Aorta (tissue), 5 donors: ENCODE measurements at regions of chr11 and their contacts with region 1.

Region 1: GRCh38 chr11:118592616-118593367 is 14.6 kb upstream of the PHLDB1 start:
- DNase-seq: peak in 1 of 2 donors; percentile 35
- ATAC-seq: peak; percentile 80
- H3K4me3 ChIP-seq: no peak overlapping the region
- H3K27ac ChIP-seq: peak overlapping the region; percentile 94 to 95
- H3K4me1 ChIP-seq: peaks cover 0 to 8% of the 10 kb centered on the region in 2 donors
- H3K27me3 ChIP-seq: no peaks in the 10 kb centered on the region

Region 2: DNA sequence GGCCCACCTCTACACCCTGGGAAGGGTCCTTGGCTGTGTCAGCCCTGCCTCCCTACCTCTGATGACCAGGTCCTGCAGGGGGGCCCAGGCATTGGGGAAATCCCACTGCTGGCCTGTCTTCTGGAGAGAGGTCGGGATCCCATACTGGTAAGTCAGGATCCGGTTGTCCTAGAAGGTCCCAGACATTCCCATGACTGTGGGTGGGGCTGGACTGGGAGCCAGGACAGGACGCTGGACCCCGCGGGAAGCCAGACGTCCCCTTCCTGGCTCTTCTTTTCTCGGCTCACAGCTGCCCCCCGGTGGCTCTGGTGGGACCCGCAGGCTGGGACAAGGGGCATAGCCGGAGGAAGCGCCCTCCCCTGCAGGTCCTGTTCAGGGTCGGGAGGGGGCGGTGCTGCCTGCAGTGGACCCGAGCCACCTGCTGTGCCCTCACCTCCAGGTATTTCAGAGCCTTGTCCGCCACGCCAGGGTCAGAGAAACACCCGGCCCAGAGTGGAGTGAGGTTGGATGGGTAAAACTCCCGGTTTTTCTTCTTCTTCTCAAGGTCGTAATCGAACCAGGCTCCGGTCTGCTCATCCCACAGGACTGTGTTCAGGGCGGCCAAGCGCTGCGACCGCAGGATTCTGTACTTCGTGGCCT is 66.6 kb after region 1 on chr11:
- intact Hi-C with region 1: loop called in 1 of 2 experiments (anchors 2 kb)
- DNase-seq: peak; percentile 93 to 98
- ATAC-seq: peak; percentile 91
- H3K4me3 ChIP-seq: no peak overlapping the region
- H3K27ac ChIP-seq: peak overlapping the region in 1 of 2 donors; percentile 55
- H3K4me1 ChIP-seq: no peaks in the 10 kb centered on the region
- H3K27me3 ChIP-seq: no peaks in the 10 kb centered on the region